Astrocyte of the cerebellum (primary cell): ENCODE measurements at regions of chr2 and their contacts with region 1.

Region 1: GRCh38 chr2:20487400-20488174 is 40.7 kb downstream of the RHOB start:
- DNase-seq: no peak
- H3K4me3 ChIP-seq: no peak overlapping the region
- CTCF ChIP-seq: no peak

Region 2: DNA sequence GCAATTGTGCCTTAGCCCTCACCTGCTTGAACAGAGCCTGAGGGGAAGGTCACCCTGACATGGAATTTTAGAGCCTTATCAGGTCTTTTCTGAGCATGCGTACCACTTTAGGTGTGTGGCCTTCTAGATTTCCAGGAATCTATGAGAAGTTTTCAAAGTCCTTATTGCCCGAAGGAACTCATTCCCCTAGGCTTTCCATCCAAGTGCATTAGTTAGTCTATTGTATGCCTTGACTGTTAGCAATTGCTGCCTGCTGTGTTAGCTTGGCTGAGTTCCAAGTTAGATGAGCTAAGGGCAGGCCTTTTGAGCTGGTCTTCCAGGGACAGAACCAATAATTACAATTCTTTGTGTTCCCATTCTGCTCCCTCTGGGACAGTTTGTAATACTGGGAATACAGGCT is 106.1 kb before region 1 on chr2:
- in situ Hi-C with region 1: loop called (anchors 5 kb)
- DNase-seq: peak; percentile 87
- H3K4me3 ChIP-seq: no peak overlapping the region
- CTCF ChIP-seq: no peak

Region 3: DNA sequence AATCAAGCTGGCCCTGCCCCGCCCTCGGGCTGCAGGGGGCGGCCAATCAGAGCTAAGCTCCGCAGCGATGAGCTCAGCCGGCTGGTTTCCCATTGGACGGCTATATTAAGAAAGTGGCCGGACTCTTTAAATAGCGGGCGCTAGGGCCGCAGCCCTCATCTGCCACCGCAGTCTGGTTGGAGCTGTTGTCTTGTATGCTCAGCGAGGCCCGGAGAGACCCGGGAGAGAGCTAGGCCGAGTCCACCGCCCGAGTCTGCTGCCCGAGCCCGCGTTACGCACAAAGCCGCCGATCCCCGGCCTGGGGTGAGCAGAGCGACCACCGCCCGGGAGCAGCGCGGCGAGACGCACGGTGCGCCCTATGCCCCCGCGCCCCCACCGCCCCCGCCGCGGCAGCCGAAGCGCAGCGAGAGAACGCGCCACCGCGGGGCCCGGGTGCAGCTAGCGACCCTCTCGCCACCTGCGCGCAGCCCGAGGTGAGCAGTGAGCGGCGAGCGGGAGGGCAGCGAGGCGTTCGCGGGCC is 40.6 kb before region 1 on chr2 and contains the start of gene RHOB:
- in situ Hi-C with region 1: no loop called
- DNase-seq: peak; percentile 96
- H3K4me3 ChIP-seq: peak within 1 kb of the TSS; percentile 71
- CTCF ChIP-seq: no peak